ENCODE measurements at regions of chr12 and their contacts with region 1.

Region 1: GRCh38 chr12:6285063-6285477 is 25.4 kb upstream of the PLEKHG6 start:
- DNase-seq: peak; percentile 48
- H3K4me3 ChIP-seq: no peak overlapping the region
- H3K27ac ChIP-seq: peak overlapping the region; percentile 81
- H3K4me1 ChIP-seq: peaks cover 49% of the 10 kb centered on the region
- H3K27me3 ChIP-seq: no peaks in the 10 kb centered on the region
- CTCF ChIP-seq: peak; percentile 94 to 95

Region 2: DNA sequence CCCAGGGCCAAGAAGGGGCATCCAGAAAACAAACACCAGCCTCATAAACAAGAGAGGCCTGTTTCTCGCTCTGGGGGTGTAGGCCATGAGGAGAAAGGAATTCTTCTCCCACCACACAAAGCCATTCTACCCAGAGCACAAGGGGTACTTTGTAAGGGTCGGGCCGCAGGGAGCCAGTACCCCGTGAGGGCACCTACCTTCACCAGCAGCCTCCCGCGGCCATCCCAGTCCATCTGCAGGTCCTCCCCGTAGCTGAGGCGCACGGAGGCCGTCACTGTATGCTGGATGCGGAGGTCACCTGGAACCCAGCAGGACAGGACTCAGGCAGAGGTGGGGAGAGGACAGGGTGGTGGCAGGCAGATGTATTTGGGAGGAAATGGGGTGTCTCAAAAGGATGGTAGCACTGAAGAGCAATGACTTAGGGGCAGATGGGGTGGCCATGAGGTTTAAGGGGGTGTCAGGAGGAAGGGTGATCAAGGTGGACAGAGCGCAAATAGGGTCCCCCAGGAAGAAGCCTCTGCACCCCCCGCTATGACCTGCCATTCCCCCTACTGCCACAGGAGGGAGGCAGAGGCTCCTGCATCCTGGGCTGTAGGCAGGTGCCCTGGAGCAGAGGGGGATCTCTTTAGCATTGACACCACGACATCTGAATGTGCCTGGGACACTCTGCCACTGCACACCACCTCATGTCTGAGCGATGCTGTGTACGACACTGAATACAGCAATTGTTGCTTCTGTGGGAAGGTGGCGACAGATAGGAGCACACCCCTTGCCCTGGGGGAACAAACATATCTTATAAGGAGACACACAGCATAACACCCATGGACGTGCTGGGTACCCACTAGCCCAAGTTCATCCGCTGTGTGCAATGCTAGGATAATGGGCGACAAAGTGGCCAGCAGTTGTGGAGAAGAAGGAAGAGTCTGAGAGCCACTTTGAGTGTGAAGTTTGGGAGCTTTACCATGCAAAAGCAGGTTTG is 222.0 kb before region 1 on chr12:
- CTCF ChIA-PET with region 1: interaction called, 6 read pairs
- dilution Hi-C with region 1: no loop called
- in situ Hi-C with region 1: loop called in 1 of 2 experiments (anchors 5 kb)
- intact Hi-C with region 1: loop called (anchors 1 kb)
- DNase-seq: peak; percentile 31
- H3K4me3 ChIP-seq: no peak overlapping the region
- H3K27ac ChIP-seq: no peak overlapping the region
- H3K4me1 ChIP-seq: no peaks in the 10 kb centered on the region
- H3K27me3 ChIP-seq: no peaks in the 10 kb centered on the region
- CTCF ChIP-seq: peak; percentile 96 to 97

Region 3: GRCh38 chr12:6195665-6196535 is 89.2 kb before region 1 on chr12:
- CTCF ChIA-PET with region 1: interaction called, 8 read pairs
- dilution Hi-C with region 1: no loop called
- in situ Hi-C with region 1: no loop called
- intact Hi-C with region 1: loop called (anchors 1 kb)
- DNase-seq: peak; percentile 88
- H3K4me3 ChIP-seq: no peak overlapping the region
- H3K27ac ChIP-seq: peak overlapping the region; percentile 52
- H3K4me1 ChIP-seq: peaks cover 20% of the 10 kb centered on the region
- H3K27me3 ChIP-seq: no peaks in the 10 kb centered on the region
- CTCF ChIP-seq: peak; percentile 82 to 93

Region 4: GRCh38 chr12:6295094-6295811 is 10.2 kb after region 1 on chr12:
- CTCF ChIA-PET with region 1: no interaction called
- dilution Hi-C with region 1: no loop called
- in situ Hi-C with region 1: no loop called
- intact Hi-C with region 1: loop called (anchors 1 kb)
- DNase-seq: peak; percentile 93
- H3K4me3 ChIP-seq: no peak overlapping the region
- H3K27ac ChIP-seq: peak overlapping the region; percentile 83
- H3K4me1 ChIP-seq: peaks cover 25% of the 10 kb centered on the region
- H3K27me3 ChIP-seq: no peaks in the 10 kb centered on the region
- CTCF ChIP-seq: no peak

Region 5: GRCh38 chr12:6335451-6336078 is 50.5 kb after region 1 on chr12:
- CTCF ChIA-PET with region 1: interaction called, 6 read pairs
- dilution Hi-C with region 1: no loop called
- in situ Hi-C with region 1: no loop called
- intact Hi-C with region 1: loop called (anchors 2 kb)
- DNase-seq: peak; percentile 84
- H3K4me3 ChIP-seq: peak overlapping the region in 2 of 3 experiments; percentile 17 to 28
- H3K27ac ChIP-seq: peak overlapping the region; percentile 88
- H3K4me1 ChIP-seq: peaks cover 87% of the 10 kb centered on the region
- H3K27me3 ChIP-seq: no peaks in the 10 kb centered on the region
- CTCF ChIP-seq: peak; percentile 26 to 72

Measured in mammary epithelial cell (primary cell).